B cell (primary cell): ENCODE measurements at regions of chr12 and their contacts with region 1.

Region 1: DNA sequence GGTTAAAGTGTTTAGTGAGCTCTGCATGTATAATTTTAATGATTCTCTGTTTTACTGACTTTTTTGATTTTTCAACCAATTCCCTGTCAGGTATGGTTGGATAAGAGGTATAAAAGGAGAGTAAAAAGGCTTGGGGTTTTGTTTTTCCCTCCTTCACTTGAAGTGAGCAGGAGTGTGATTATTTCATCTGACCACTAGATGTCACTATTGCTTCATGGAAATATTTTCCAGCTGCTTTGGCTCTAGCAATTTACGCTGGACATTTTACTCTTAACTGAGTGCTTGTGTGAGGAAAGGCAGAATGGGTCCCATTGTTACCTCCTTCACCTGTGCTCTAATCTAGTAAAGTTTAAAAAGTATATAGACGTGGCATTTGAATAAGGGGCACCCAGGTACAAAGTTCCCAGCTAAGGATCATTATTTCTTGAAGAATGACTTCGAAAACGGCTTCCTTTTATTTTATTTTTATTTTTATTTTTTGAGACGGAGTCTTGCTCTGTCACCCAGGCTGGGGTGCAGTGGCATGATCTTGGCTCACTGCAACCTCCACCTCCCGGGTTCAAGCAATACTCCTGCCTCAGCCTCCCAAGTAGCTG is 66.5 kb downstream of the TBC1D30 start:
- DNase-seq: peak; percentile 68
- ATAC-seq: peak; percentile 49
- H3K4me3 ChIP-seq: no peak overlapping the region
- H3K4me3 Mint-ChIP-seq: no peak overlapping the region
- H3K27ac ChIP-seq: no peak overlapping the region
- H3K27ac Mint-ChIP-seq: no peak overlapping the region
- H3K4me1 ChIP-seq: no peaks in the 10 kb centered on the region
- H3K4me1 Mint-ChIP-seq: no peaks in the 10 kb centered on the region
- H3K27me3 ChIP-seq: no peaks in the 10 kb centered on the region
- H3K27me3 Mint-ChIP-seq: peaks cover 28% of the 10 kb centered on the region
- CTCF ChIP-seq: peak; percentile 88

Region 2: DNA sequence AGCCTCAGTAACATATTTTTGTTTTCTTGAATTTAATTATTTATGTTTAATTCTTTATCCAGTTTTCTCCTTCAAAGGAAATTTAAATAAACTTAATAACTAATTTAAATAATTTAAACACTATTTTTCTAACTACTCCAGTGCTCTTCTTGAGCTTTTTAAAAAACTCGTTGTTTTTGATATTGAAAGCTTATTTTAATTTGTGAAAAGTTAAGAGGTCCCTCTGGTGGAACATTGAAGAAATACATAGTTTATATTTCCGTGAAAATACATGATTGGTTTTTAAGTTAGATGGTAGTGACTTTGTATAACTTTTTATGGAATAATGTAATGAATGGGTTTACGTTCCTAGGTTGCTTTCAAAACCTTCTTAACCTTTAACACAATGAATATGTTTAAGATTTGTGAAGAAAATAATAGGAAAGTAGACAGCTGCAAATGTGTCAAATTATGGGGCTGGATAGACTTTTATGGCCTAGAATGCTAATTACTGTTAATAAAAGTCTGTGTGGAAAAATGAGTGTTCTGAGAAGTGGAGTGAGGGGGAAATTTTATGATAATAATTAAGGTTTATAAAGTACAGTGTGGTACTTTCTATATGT is 341.6 kb after region 1 on chr12:
- CTCF ChIA-PET with region 1: interaction called, 86 read pairs
- POLR2A ChIA-PET with region 1: no interaction called
- intact Hi-C with region 1: loop called (anchors 1 kb)
- DNase-seq: peak; percentile 49
- ATAC-seq: no peak
- H3K4me3 ChIP-seq: no peak overlapping the region
- H3K4me3 Mint-ChIP-seq: no peak overlapping the region
- H3K27ac ChIP-seq: peak overlapping the region in 1 of 2 donors; percentile 37
- H3K27ac Mint-ChIP-seq: no peak overlapping the region
- H3K4me1 ChIP-seq: peaks cover 0 to 2% of the 10 kb centered on the region in 2 donors
- H3K4me1 Mint-ChIP-seq: peaks cover 8% of the 10 kb centered on the region
- H3K27me3 ChIP-seq: no peaks in the 10 kb centered on the region
- H3K27me3 Mint-ChIP-seq: no peaks in the 10 kb centered on the region
- CTCF ChIP-seq: peak; percentile 86

Region 3: DNA sequence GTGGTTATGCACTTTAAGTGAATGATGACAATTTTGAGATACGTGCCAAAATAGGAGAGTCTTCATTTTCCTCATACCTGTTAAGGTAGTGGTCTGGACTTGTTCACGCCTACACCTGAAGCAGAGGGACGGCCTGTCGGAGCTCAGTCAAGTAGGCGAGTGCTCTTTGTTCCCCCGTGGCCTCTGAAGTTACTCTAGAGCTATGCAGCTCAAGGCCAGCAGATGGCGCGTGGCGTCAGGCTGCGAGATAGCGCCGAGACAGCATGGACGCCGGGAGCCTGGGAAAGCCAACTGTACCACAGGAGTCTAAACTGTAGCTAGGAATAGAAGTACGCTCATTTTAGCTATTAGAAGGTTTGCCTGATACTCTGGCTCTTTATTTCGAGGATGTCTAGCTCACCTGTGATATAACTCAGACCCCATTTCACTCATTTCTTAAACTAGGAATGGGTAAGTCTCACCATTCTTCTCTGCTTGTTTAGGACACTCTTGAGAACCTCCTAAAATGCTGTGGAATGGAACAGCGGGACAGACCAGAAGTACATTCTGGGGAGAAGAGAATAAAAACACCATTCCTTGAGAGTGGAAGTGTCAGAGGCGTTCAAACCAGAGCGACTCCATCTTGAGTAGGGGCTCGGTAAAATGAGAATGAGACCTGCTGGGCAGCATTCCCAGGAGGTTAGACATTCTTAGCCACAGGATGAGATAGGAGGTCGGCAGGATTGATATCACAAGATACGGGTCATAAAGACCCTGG is 665.9 kb after region 1 on chr12:
- CTCF ChIA-PET with region 1: interaction called, 5 read pairs
- POLR2A ChIA-PET with region 1: no interaction called
- intact Hi-C with region 1: loop called (anchors 1 kb)
- DNase-seq: peak; percentile 66
- ATAC-seq: peak; percentile 60
- H3K4me3 ChIP-seq: no peak overlapping the region
- H3K4me3 Mint-ChIP-seq: no peak overlapping the region
- H3K27ac ChIP-seq: no peak overlapping the region
- H3K27ac Mint-ChIP-seq: no peak overlapping the region
- H3K4me1 ChIP-seq: no peaks in the 10 kb centered on the region
- H3K4me1 Mint-ChIP-seq: peaks cover 5% of the 10 kb centered on the region
- H3K27me3 ChIP-seq: peaks cover 0 to 7% (median 0%) of the 10 kb centered on the region in 4 experiments
- H3K27me3 Mint-ChIP-seq: peaks cover 13% of the 10 kb centered on the region
- CTCF ChIP-seq: peak; percentile 83

Region 4: GRCh38 chr12:65986047-65986446 is 1095.1 kb after region 1 on chr12:
- CTCF ChIA-PET with region 1: interaction called, 5 read pairs
- POLR2A ChIA-PET with region 1: no interaction called
- intact Hi-C with region 1: loop called (anchors 1 kb)
- DNase-seq: no peak
- ATAC-seq: no peak
- H3K4me3 ChIP-seq: no peak overlapping the region
- H3K4me3 Mint-ChIP-seq: no peak overlapping the region
- H3K27ac ChIP-seq: no peak overlapping the region
- H3K27ac Mint-ChIP-seq: no peak overlapping the region
- H3K4me1 ChIP-seq: no peaks in the 10 kb centered on the region
- H3K4me1 Mint-ChIP-seq: no peaks in the 10 kb centered on the region
- H3K27me3 ChIP-seq: peaks cover 0 to 4% (median 0%) of the 10 kb centered on the region in 4 experiments
- H3K27me3 Mint-ChIP-seq: no peaks in the 10 kb centered on the region
- CTCF ChIP-seq: no peak

Region 5: GRCh38 chr12:66087365-66087943 is 1196.5 kb after region 1 on chr12:
- CTCF ChIA-PET with region 1: interaction called, 63 read pairs
- POLR2A ChIA-PET with region 1: no interaction called
- intact Hi-C with region 1: loop called (anchors 1 kb)
- DNase-seq: peak; percentile 60
- ATAC-seq: no peak
- H3K4me3 ChIP-seq: no peak overlapping the region
- H3K4me3 Mint-ChIP-seq: no peak overlapping the region
- H3K27ac ChIP-seq: no peak overlapping the region
- H3K27ac Mint-ChIP-seq: no peak overlapping the region
- H3K4me1 ChIP-seq: no peaks in the 10 kb centered on the region
- H3K4me1 Mint-ChIP-seq: no peaks in the 10 kb centered on the region
- H3K27me3 ChIP-seq: peaks cover 0 to 2% (median 0%) of the 10 kb centered on the region in 4 experiments
- H3K27me3 Mint-ChIP-seq: peaks cover 16% of the 10 kb centered on the region
- CTCF ChIP-seq: peak; percentile 74

Region 6: DNA sequence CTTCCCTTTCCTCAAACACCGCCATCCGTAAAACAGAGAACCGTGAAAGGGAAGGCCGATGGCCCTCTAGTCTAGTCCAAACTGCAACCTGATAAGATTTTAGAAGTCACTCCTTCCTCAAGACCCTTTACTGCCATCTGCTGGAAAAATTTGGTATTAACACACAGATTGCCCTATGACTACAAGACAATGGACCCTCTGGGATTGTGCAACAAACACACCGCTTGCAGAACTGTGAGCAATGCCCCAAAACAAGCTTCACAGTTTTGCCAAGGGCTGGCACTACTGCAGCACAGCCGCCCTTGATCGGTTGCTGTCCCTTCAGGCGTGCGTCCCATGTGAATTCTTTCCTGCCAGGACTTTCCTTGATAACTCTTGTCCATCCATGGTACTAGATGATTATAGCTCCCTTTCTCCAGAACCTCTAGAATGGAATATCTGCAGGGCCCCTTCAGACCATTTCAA is 1216.5 kb after region 1 on chr12:
- CTCF ChIA-PET with region 1: interaction called, 48 read pairs
- POLR2A ChIA-PET with region 1: no interaction called
- intact Hi-C with region 1: loop called (anchors 1 kb)
- DNase-seq: peak; percentile 83
- ATAC-seq: peak; percentile 86
- H3K4me3 ChIP-seq: no peak overlapping the region
- H3K4me3 Mint-ChIP-seq: no peak overlapping the region
- H3K27ac ChIP-seq: no peak overlapping the region
- H3K27ac Mint-ChIP-seq: no peak overlapping the region
- H3K4me1 ChIP-seq: no peaks in the 10 kb centered on the region
- H3K4me1 Mint-ChIP-seq: peaks cover 2% of the 10 kb centered on the region
- H3K27me3 ChIP-seq: peaks cover 0 to 6% (median 2%) of the 10 kb centered on the region in 4 experiments
- H3K27me3 Mint-ChIP-seq: peaks cover 20% of the 10 kb centered on the region
- CTCF ChIP-seq: peak; percentile 81